Right ventricle myocardium superior (tissue), 1 donor: ENCODE measurements at regions of chr20 and their contacts with region 1.

Region 1: GRCh38 chr20:58099956-58100730 is 128.3 kb downstream of the ANKRD60 start:
- DNase-seq: no peak
- ATAC-seq: no peak

Region 2: DNA sequence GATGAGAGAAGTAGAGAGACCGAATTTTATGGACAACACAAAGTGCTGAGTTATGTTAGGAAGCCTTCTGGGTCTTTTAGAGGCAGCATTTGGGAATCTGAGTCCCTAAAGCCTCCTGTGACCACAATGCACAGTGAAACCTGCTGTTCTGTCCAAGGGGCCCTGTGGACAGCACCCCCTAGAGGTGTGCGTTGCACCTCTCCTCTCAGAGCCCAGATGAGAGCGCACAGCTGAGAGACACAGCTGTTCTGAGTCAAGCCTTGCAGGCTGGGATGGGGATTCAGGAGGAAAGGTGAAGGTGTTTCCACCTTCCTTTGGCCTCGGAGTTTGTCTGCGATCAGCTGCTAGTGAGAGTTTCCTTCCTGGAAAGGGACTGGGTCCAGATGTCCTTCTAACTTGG is 526.3 kb before region 1 on chr20:
- intact Hi-C with region 1: no loop called
- DNase-seq: no peak
- ATAC-seq: no peak

Region 3: GRCh38 chr20:57586370-57586793 is 513.8 kb before region 1 on chr20:
- intact Hi-C with region 1: no loop called
- DNase-seq: no peak
- ATAC-seq: no peak

Region 4: DNA sequence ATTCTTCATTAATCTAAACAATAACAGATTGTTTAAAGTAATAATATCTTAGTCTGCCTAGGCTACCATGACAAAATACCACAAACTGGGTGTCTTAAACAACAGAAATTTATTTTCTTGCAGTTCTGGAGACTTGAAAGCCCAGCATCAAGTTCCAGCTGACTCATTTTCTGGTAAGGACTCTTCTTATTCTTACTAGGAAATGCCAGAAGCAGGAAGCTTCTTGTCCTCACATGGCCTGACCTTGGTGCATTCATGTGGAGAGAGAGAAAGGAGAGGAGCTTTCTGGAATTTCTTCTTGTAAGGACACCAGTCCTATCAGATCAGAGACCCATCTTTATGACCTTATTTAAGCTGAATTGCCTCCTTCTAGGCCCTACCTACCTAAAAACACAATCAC is 17.8 kb after region 1 on chr20:
- intact Hi-C with region 1: loop called (anchors 2 kb)
- DNase-seq: no peak
- ATAC-seq: no peak